ENCODE measurements at regions of chr15 and their contacts with region 1.

Region 1: GRCh38 chr15:79091204-79091867 is 756 bp upstream of the RASGRF1 start:
- DNase-seq: no peak
- H3K4me3 Mint-ChIP-seq: no peak overlapping the region
- H3K27ac Mint-ChIP-seq: no peak overlapping the region
- H3K4me1 Mint-ChIP-seq: peaks cover 5% of the 10 kb centered on the region
- H3K27me3 Mint-ChIP-seq: peaks cover 55% of the 10 kb centered on the region

Region 2: DNA sequence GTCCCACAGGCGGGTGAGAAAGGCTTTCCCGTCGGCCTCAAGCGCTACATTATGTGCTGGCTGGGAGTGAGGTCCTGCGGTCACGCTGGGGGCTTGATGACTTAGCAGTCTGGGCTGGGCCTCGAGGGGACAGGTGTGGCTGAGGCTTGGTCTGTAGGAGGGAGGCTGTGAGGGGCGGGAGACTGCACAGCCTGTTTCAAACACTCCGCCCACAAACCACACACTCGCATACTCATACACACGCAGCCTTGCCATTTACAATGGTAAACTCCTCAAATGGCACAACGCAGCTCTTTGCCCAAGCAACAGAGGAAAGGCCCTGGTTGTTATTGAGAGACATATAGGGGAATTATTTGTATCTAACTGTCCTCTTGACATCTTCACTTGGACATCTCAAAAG is 31.7 kb after region 1 on chr15:
- intact Hi-C with region 1: no loop called
- DNase-seq: no peak
- H3K4me3 Mint-ChIP-seq: no peak overlapping the region
- H3K27ac Mint-ChIP-seq: no peak overlapping the region
- H3K4me1 Mint-ChIP-seq: no peaks in the 10 kb centered on the region
- H3K27me3 Mint-ChIP-seq: peaks cover 10% of the 10 kb centered on the region

Region 3: DNA sequence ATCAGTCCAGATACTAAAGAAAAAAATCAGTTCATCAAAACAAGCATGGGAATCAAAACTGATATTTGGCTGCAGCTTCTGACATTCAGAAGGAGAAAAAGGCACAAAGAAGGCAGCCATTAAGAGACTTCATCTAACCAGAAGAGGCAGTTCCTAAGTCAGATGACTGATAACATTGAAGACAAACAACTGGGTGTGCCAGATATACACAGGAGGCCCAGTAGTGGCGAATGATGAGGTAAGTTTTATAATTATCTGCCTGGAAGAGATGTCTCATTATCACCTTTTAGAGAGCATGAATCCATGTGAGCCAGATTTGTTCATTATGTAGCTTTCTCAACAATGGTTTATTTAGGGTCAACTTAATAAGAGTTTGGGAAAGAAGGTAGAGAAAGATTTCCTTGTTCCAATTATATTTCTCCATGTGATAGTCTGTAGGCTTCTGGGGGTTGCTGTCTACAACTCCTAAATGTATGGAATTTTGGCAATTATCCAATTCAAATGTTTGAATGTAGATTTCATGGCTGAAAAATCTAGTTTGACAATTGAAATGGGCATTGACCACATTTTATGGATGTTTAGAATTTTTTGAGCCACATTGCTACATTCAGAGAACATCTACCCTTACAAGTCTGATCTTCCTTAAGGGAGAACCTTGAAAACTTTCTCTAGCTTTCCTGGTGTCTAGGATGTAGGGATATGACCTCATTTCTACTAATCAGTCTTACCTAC is 49.7 kb after region 1 on chr15:
- intact Hi-C with region 1: no loop called
- DNase-seq: no peak
- H3K4me3 Mint-ChIP-seq: no peak overlapping the region
- H3K27ac Mint-ChIP-seq: no peak overlapping the region
- H3K4me1 Mint-ChIP-seq: no peaks in the 10 kb centered on the region
- H3K27me3 Mint-ChIP-seq: peaks cover 10% of the 10 kb centered on the region

Region 4: GRCh38 chr15:79431636-79432344 is 340.5 kb after region 1 on chr15 and contains the start of gene MINAR1:
- intact Hi-C with region 1: loop called (anchors 10 kb)
- DNase-seq: no peak
- H3K4me3 Mint-ChIP-seq: no peak within 1 kb of the TSS
- H3K27ac Mint-ChIP-seq: no peak within 1 kb of the TSS
- H3K4me1 Mint-ChIP-seq: no peaks in the 10 kb centered on the region
- H3K27me3 Mint-ChIP-seq: peaks cover 62% of the 10 kb centered on the region
- total RNA-seq, gene MINAR1: 0.55 and 0.67 TPM in 2 replicates